GM23248 (cell line): ENCODE measurements at regions of chr19 and their contacts with region 1.

Region 1: GRCh38 chr19:2027361-2027760 is 11.8 kb upstream of the BTBD2 start:
- DNase-seq: peak; percentile 92
- H3K4me3 ChIP-seq: no peak overlapping the region
- H3K27ac ChIP-seq: no peak overlapping the region; the same call in 1 of the 2 replicates
- H3K4me1 ChIP-seq: peaks cover 12% of the 10 kb centered on the region
- H3K27me3 ChIP-seq: no peaks in the 10 kb centered on the region

Region 2: GRCh38 chr19:1747285-1748114 is 279.9 kb before region 1 on chr19:
- in situ Hi-C with region 1: no loop called
- DNase-seq: peak; percentile 71
- H3K4me3 ChIP-seq: no peak overlapping the region
- H3K27ac ChIP-seq: no peak overlapping the region
- H3K4me1 ChIP-seq: peaks cover 2% of the 10 kb centered on the region; the same call in 1 of the 2 replicates
- H3K27me3 ChIP-seq: peaks cover 68% of the 10 kb centered on the region

Region 3: DNA sequence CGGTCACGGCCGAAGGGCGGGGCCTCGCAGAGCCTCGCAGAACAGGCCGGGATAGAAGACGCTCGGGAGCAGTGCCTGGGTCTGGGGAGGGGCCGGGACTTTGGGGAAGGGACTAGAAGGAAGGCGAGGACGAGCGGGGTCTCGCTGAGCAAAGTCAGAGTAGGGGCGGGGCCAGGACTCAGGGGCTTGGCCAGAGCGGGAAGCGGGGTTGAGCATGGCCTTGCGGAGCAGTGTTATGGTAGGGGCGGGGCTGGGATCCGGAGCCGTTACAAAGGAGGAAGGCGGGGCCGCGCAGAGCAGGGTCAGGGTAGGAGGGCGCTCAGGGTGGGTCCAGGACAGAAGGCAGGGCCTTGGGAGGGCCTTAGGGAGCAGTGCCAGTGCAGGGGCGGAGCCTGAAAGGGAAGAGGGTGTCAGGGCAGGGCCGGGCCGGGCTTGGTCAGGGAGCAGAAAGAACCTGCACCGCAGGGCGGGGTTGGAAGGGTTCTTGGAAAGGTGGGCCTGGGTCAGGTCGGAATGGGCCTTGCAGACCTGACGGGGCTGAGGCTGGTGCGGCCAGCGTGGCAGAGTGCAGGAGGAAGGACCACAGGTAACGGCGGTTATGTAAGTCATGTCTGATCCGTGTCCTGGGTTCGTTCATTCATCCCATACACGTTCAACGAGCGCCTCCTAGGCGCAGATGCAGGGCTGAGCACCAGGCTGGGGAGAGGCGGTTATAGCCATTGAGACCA is 214.7 kb before region 1 on chr19:
- in situ Hi-C with region 1: no loop called
- DNase-seq: peak; percentile 91
- H3K4me3 ChIP-seq: peak overlapping the region; percentile 77
- H3K27ac ChIP-seq: no peak overlapping the region
- H3K4me1 ChIP-seq: peaks cover 3% of the 10 kb centered on the region; the same call in 1 of the 2 replicates
- H3K27me3 ChIP-seq: no peaks in the 10 kb centered on the region

Region 4: DNA sequence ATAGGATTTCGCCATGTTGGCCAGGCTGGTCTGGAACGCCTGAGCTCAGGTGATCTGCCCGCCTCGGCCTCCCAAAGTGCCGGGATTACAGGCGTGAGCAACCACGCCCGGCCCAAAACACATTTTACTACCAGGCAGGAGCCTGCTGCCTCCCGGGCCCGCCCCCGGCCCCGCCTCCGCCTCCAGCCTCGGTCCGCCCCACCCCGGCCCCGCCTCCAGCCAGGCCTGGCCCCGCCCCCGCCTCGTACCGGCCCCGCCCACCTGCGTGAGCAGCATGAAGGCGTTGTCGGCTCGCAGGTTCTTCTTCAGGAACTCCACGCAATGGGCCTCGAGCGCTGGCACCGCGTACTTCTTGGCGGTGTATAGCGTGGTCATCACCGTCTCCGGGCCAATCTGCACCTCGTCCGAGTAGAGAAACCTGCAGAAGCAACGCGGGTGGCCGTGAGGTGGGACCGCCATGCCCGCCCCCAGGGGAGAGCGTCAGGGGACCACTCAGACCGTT is 34.6 kb before region 1 on chr19:
- in situ Hi-C with region 1: no loop called
- DNase-seq: peak; percentile 52
- H3K4me3 ChIP-seq: no peak overlapping the region
- H3K27ac ChIP-seq: no peak overlapping the region
- H3K4me1 ChIP-seq: no peaks in the 10 kb centered on the region
- H3K27me3 ChIP-seq: no peaks in the 10 kb centered on the region

Region 5: GRCh38 chr19:2064788-2065524 is 37.6 kb after region 1 on chr19:
- in situ Hi-C with region 1: loop called (anchors 5 kb)
- DNase-seq: peak; percentile 59
- H3K4me3 ChIP-seq: 0 out of 2 replicates have a peak overlapping the region, but pooled peaks have one; percentile 8
- H3K27ac ChIP-seq: peak overlapping the region; percentile 31
- H3K4me1 ChIP-seq: peaks cover 22% of the 10 kb centered on the region
- H3K27me3 ChIP-seq: no peaks in the 10 kb centered on the region

Region 6: GRCh38 chr19:2231621-2232221 is 204.4 kb after region 1 on chr19:
- in situ Hi-C with region 1: no loop called
- DNase-seq: peak; percentile 33
- H3K4me3 ChIP-seq: no peak overlapping the region
- H3K27ac ChIP-seq: no peak overlapping the region
- H3K4me1 ChIP-seq: no peaks in the 10 kb centered on the region
- H3K27me3 ChIP-seq: no peaks in the 10 kb centered on the region